Heart right ventricle (tissue), 16 donors: ENCODE measurements at regions of chr5 and their contacts with region 1.

Region 1: DNA sequence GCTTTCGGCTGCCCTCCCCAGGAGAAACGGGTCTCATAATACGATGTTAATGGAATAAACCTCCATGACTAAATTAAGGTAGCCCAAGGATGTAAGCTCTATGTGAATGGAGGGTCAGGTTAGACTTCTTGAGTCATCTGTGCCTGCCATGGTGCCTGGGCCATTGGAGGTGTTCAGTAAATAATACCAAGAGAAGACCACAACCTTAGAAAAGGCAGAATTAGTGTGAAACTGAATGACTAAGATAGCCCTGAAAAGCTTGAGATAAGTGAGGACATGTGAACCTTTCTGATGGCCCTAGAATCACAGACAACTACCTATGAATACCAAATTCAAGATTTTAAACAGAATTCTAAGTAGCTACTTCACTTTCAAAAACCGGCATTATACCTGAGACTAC is 160.6 kb downstream of the KIAA0825 start:
- DNase-seq: no peak
- ATAC-seq: no peak
- H3K4me3 ChIP-seq: no peak overlapping the region
- H3K27ac ChIP-seq: no peak overlapping the region
- H3K4me1 ChIP-seq: no peaks in the 10 kb centered on the region
- H3K27me3 ChIP-seq: no peaks in the 10 kb centered on the region
- CTCF ChIP-seq: no peak

Region 2: GRCh38 chr5:94431696-94432095 is 26.1 kb before region 1 on chr5:
- intact Hi-C with region 1: loop called in 1 of 10 experiments (anchors 1 kb)
- DNase-seq: no peak
- ATAC-seq: no peak
- H3K4me3 ChIP-seq: no peak overlapping the region
- H3K27ac ChIP-seq: no peak overlapping the region
- H3K4me1 ChIP-seq: peaks cover 0 to 22% (median 0%) of the 10 kb centered on the region in 9 donors
- H3K27me3 ChIP-seq: no peaks in the 10 kb centered on the region
- CTCF ChIP-seq: no peak